K562 (cell line): ENCODE measurements at regions of chr14 and their contacts with region 1.

Region 1: GRCh38 chr14:60331201-60332045 is 82.4 kb downstream of the PPM1A start:
- DNase-seq: peak; percentile 54 to 79 (median 54)
- ATAC-seq: peak; percentile 91
- H3K4me3 ChIP-seq: peak overlapping the region; percentile 21
- H3K27ac ChIP-seq: peak overlapping the region; percentile 37; the same call in 2 of the 3 replicates
- H3K4me1 ChIP-seq: peaks cover 2 to 6% of the 10 kb centered on the region in 2 experiments; a peak in 3 of 5 replicates
- H3K27me3 ChIP-seq: no peaks in the 10 kb centered on the region
- CTCF ChIP-seq: peak; percentile 66 to 76 (median 67)
- EP300 ChIP-seq: no peak
- POLR2A ChIP-seq: 0 out of 2 replicates have a peak, but pooled peaks have one; percentile 38
- RAD21 ChIP-seq: peak; percentile 46 to 51; a peak in 3 of 4 replicates

Region 2: DNA sequence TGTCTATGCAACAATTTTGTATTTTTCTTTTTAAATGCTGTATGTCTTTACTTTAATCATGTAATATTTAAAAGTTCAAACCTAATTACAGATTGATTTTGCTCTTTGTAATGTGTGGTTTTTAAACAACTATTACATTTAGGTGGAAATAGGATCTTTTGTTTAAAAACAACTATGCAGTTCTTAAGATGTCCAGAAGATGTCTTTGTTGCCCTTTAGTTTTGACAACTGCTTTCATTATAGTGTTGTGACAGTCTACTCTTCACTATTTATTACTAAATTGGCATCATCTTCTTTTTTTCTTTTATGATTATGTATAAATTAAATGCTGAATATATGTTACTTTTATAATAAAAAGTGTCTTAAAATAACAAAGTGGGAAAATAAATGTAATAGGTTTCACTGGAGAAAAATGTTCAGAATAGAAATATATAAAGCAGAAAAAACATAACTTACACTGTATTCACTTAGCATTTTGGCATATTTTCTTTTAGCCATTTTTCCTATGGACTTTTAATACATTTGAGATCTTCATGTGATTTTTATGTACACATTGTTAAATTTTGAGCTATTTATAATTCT is 266.8 kb before region 1 on chr14:
- CTCF ChIA-PET with region 1: no interaction called
- POLR2A ChIA-PET with region 1: no interaction called
- in situ Hi-C with region 1: no loop called
- intact Hi-C with region 1: loop called (anchors 10 kb)
- DNase-seq: peak in 2 of 4 experiments; percentile 9 to 26
- ATAC-seq: peak; percentile 63; the same call in 2 of the 3 replicates
- H3K4me3 ChIP-seq: no peak overlapping the region
- H3K27ac ChIP-seq: no peak overlapping the region
- H3K4me1 ChIP-seq: no peaks in the 10 kb centered on the region
- H3K27me3 ChIP-seq: no peaks in the 10 kb centered on the region
- CTCF ChIP-seq: peak in 2 of 3 experiments; percentile 25 to 70; a peak in 3 of 6 replicates
- EP300 ChIP-seq: no peak
- POLR2A ChIP-seq: no peak
- RAD21 ChIP-seq: peak; percentile 75 to 85

Region 3: GRCh38 chr14:60204104-60204842 is 127.2 kb before region 1 on chr14:
- CTCF ChIA-PET with region 1: no interaction called
- POLR2A ChIA-PET with region 1: no interaction called
- in situ Hi-C with region 1: loop called (anchors 10 kb)
- intact Hi-C with region 1: no loop called
- DNase-seq: no peak
- ATAC-seq: no peak
- H3K4me3 ChIP-seq: no peak overlapping the region
- H3K27ac ChIP-seq: no peak overlapping the region
- H3K4me1 ChIP-seq: no peaks in the 10 kb centered on the region
- H3K27me3 ChIP-seq: no peaks in the 10 kb centered on the region
- CTCF ChIP-seq: no peak
- EP300 ChIP-seq: no peak
- POLR2A ChIP-seq: no peak
- RAD21 ChIP-seq: no peak

Region 4: DNA sequence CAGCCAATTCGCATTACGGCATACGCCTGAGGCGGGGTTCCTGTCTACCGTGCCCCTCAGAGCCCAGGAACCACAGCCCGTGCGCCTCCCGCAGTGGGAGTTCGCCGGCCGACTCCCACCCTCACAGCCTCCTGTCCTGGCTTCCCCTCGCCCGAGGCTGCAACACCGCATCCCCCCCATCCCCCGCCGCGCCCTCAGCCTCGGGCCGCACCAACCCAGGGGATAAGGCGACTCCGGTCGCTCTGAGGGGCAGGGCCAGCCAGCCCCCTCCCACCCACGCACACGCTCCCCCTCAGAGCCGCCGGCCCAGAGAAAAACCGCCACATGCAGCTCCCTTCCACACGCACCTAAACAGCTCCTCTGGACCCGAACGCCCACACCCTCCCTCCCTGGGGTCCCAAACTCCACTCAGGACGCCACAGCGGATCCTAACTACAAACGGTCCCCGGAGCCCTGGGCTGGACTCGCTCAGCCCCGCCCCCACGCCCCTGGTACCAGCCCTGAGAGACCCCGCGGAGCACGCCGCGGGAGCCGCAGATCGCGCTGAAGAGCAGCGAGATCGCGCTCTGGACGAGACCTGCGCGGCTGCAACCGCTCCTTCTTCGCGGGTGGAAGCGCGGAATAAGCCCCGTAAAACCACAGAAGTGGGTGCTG is 154.3 kb after region 1 on chr14 and contains the start of gene C14orf39:
- CTCF ChIA-PET with region 1: interaction called, 3 read pairs
- POLR2A ChIA-PET with region 1: no interaction called
- in situ Hi-C with region 1: no loop called
- intact Hi-C with region 1: loop called (anchors 5 kb)
- DNase-seq: peak; percentile 79 to 86 (median 81)
- ATAC-seq: peak; percentile 95
- H3K4me3 ChIP-seq: peak within 1 kb of the TSS; percentile 45
- H3K27ac ChIP-seq: peak within 1 kb of the TSS; percentile 87
- H3K4me1 ChIP-seq: peaks cover 0 to 7% of the 10 kb centered on the region in 2 experiments; a peak in 3 of 5 replicates
- H3K27me3 ChIP-seq: no peaks in the 10 kb centered on the region
- CTCF ChIP-seq: peak in 1 of 3 experiments; percentile 8; a peak in 1 of 6 replicates
- EP300 ChIP-seq: 0 out of 2 replicates have a peak, but pooled peaks have one; percentile 24
- POLR2A ChIP-seq: peak; percentile 73
- RAD21 ChIP-seq: no peak
- polyA plus RNA-seq, gene C14orf39: 1.2 to 1.4 TPM

Region 5: DNA sequence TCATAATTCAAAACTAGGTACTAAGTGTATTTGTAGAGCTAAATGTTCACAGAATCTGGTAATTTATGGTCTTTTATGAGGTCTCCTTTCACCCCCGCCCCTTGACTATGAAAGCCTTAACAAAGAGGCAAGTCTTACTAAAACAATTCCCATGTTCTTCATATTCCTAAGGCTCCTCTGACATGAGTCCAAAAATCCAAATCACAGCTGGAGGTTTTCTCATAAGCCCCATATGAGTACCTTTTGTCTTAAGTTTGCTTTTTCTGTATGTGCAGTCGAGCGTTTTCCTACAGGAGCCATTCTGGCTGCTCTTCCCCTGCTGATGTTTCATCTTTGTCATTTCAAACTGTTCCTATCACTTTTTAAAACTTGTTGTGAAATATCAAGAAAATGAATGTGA is 262.6 kb after region 1 on chr14:
- CTCF ChIA-PET with region 1: no interaction called
- POLR2A ChIA-PET with region 1: no interaction called
- in situ Hi-C with region 1: no loop called
- intact Hi-C with region 1: no loop called
- DNase-seq: no peak
- ATAC-seq: no peak
- H3K4me3 ChIP-seq: no peak overlapping the region
- H3K27ac ChIP-seq: no peak overlapping the region
- H3K4me1 ChIP-seq: no peaks in the 10 kb centered on the region
- H3K27me3 ChIP-seq: no peaks in the 10 kb centered on the region
- CTCF ChIP-seq: no peak
- EP300 ChIP-seq: no peak
- POLR2A ChIP-seq: no peak
- RAD21 ChIP-seq: no peak

Region 6: DNA sequence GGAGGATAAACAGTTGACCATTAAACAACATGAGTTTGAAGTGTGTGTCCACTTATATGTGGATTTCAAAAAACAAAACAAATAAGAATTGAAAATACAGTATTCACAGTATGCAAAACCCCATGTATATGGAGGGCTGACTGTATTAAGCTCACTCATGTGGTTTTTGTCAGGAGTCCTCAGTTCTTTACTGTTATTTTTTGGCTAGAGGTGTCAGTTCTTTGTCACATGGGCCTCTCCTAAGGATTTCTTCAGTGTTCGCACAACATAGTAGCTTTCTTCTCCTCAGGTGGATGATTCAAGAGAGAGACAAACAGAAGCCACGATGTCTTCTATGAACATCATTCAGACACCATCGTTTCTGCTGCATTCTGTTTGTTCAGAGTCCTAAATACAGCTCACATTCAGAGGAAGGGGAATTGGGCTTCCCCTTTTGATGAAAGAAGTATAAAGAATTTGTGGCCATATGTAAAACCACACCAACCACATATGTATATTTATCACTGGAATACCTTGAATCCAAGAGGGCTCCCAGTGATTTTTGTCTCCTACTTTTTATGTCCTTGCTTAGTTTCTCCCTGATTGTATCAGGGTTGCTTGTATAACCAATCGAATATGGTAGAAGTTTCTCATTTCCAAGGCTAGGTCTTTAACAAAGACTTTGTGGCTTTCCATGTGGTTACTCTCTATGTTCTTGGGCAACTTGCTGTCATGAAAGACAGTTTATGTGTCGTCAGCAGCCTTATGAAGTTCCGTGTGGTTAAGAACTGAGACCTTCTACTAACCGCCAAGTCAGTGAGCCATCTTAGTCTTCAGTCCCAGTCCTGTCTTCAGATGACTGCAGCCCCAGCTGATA is 422.1 kb after region 1 on chr14:
- CTCF ChIA-PET with region 1: no interaction called
- POLR2A ChIA-PET with region 1: no interaction called
- in situ Hi-C with region 1: no loop called
- intact Hi-C with region 1: no loop called
- DNase-seq: peak in 2 of 4 experiments; percentile 11 to 40
- ATAC-seq: peak; percentile 82
- H3K4me3 ChIP-seq: no peak overlapping the region
- H3K27ac ChIP-seq: peak overlapping the region; percentile 28; the same call in 1 of the 3 replicates
- H3K4me1 ChIP-seq: peaks cover 0 to 6% of the 10 kb centered on the region in 2 experiments; a peak in 2 of 5 replicates
- H3K27me3 ChIP-seq: no peaks in the 10 kb centered on the region
- CTCF ChIP-seq: no peak
- EP300 ChIP-seq: no peak
- POLR2A ChIP-seq: no peak
- RAD21 ChIP-seq: no peak

Region 7: GRCh38 chr14:61252369-61253063 is 921.1 kb after region 1 on chr14:
- CTCF ChIA-PET with region 1: no interaction called
- POLR2A ChIA-PET with region 1: no interaction called
- in situ Hi-C with region 1: no loop called
- intact Hi-C with region 1: loop called (anchors 10 kb)
- DNase-seq: peak; percentile 59 to 72 (median 62)
- ATAC-seq: peak; percentile 98
- H3K4me3 ChIP-seq: no peak overlapping the region
- H3K27ac ChIP-seq: no peak overlapping the region
- H3K4me1 ChIP-seq: no peaks in the 10 kb centered on the region
- H3K27me3 ChIP-seq: peaks cover 0 to 9% of the 10 kb centered on the region in 2 experiments; a peak in 3 of 5 replicates
- CTCF ChIP-seq: peak; percentile 72 to 79 (median 73)
- EP300 ChIP-seq: no peak
- POLR2A ChIP-seq: no peak
- RAD21 ChIP-seq: peak; percentile 84 to 89